Activated CD4-positive, alpha-beta memory T cell treated with anti-CD3 and anti-CD28 coated beads for 36 hours (primary cell): ENCODE measurements at regions of chr12 and their contacts with region 1.

Region 1: DNA sequence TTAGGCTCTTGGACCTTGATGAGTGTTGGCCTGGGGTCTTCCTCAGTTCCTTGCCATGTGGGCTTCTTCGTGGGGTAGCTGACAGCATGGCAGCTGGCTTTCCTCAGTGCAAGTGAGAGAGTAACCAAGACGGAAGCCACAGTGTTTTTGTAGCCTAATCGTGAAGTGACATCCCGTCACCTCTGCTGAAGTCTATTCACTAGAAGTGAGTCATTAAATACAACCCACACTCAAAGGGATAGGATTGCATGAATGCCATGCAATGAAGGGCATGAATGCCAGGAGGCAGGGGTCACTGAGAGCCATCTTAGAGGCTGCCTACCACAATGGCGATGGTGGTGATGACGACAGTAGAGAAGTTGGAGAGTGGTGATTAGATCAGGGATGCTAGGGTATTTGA is 13.5 kb upstream of the ASIC1 start:
- DNase-seq: peak; percentile 41
- H3K4me3 Mint-ChIP-seq: no peak overlapping the region
- H3K27ac Mint-ChIP-seq: peak overlapping the region; percentile 63
- H3K4me1 Mint-ChIP-seq: peaks cover 21% of the 10 kb centered on the region
- H3K27me3 Mint-ChIP-seq: no peaks in the 10 kb centered on the region

Region 2: GRCh38 chr12:50074936-50075807 is 31.3 kb after region 1 on chr12:
- CTCF ChIA-PET with region 1: interaction called, 182 read pairs
- POLR2A ChIA-PET with region 1: no interaction called
- intact Hi-C with region 1: loop called (anchors 1 kb)
- DNase-seq: peak; percentile 87
- H3K4me3 Mint-ChIP-seq: no peak overlapping the region
- H3K27ac Mint-ChIP-seq: no peak overlapping the region
- H3K4me1 Mint-ChIP-seq: peaks cover 7% of the 10 kb centered on the region
- H3K27me3 Mint-ChIP-seq: no peaks in the 10 kb centered on the region